Heart right ventricle (tissue), 16 donors: ENCODE measurements at regions of chr6 and their contacts with region 1.

Region 1: GRCh38 chr6:6057424-6058053 is 50.8 kb upstream of the NRN1 start:
- DNase-seq: peak in 1 of 2 donors; percentile 42
- ATAC-seq: peak in 7 of 8 donors; percentile 51 to 70 (median 62)
- H3K4me3 ChIP-seq: no peak overlapping the region
- H3K27ac ChIP-seq: no peak overlapping the region
- H3K4me1 ChIP-seq: no peaks in the 10 kb centered on the region
- H3K27me3 ChIP-seq: peaks cover 0 to 25% (median 7%) of the 10 kb centered on the region in 7 donors
- CTCF ChIP-seq: peak; percentile 32 to 82 (median 71)

Region 2: DNA sequence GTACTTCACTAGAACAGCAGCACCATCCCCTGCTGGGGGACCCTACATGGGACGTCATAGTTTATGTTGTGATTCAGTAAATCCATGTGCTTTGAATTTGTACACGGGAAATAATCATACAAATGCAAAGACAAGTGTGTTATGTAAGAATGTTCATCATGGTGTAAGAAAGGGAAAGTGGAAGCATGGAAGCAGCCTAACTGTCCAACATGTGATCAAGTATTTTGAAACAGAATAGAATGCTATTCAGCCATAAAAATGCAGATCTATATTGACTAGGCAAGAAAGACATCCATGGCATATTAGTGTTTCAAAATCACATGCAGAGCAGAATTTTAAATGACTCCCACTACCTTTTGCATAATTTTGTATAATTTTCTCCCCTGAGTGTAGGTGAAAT is 145.3 kb after region 1 on chr6:
- intact Hi-C with region 1: no loop called
- DNase-seq: no peak
- ATAC-seq: no peak
- H3K4me3 ChIP-seq: no peak overlapping the region
- H3K27ac ChIP-seq: no peak overlapping the region
- H3K4me1 ChIP-seq: no peaks in the 10 kb centered on the region
- H3K27me3 ChIP-seq: no peaks in the 10 kb centered on the region
- CTCF ChIP-seq: no peak

Region 3: GRCh38 chr6:6635869-6636268 is 578.3 kb after region 1 on chr6:
- intact Hi-C with region 1: loop called in 1 of 10 experiments (anchors 10 kb)
- DNase-seq: no peak
- ATAC-seq: no peak
- H3K4me3 ChIP-seq: no peak overlapping the region
- H3K27ac ChIP-seq: no peak overlapping the region
- H3K4me1 ChIP-seq: peaks cover 0 to 11% (median 0%) of the 10 kb centered on the region in 9 donors
- H3K27me3 ChIP-seq: no peaks in the 10 kb centered on the region
- CTCF ChIP-seq: no peak